H1 (cell line): ENCODE measurements at regions of chr19 and their contacts with region 1.

Region 1: GRCh38 chr19:17336872-17337722 is at the start of gene GTPBP3:
- DNase-seq: peak; percentile 94 to 96
- H3K4me3 ChIP-seq: peak within 1 kb of the TSS; percentile 74 to 99 (median 96)
- H3K27ac ChIP-seq: peak within 1 kb of the TSS; percentile 83
- H3K4me1 ChIP-seq: peaks cover 0 to 36% (median 28%) of the 10 kb centered on the region in 4 experiments; a peak in 5 of 7 replicates
- H3K27me3 ChIP-seq: no peaks in the 10 kb centered on the region
- CTCF ChIP-seq: no peak
- EP300 ChIP-seq: no peak
- POLR2A ChIP-seq: peak in 1 of 2 experiments; percentile 86; a peak in 2 of 3 replicates
- RAD21 ChIP-seq: no peak
- total RNA-seq, gene GTPBP3: 52.7 and 56.0 TPM in 2 replicates

Region 2: GRCh38 chr19:17226002-17226933 is 110.8 kb before region 1 on chr19 and contains the start of gene OCEL1:
- CTCF ChIA-PET with region 1: no interaction called
- POLR2A ChIA-PET with region 1: interaction called, 14 read pairs
- DNase-seq: peak; percentile 89 to 96
- H3K4me3 ChIP-seq: peak within 1 kb of the TSS; percentile 52 to 80 (median 65)
- H3K27ac ChIP-seq: peak within 1 kb of the TSS; percentile 84; the same call in 1 of the 2 replicates
- H3K4me1 ChIP-seq: peaks cover 0 to 4% (median 3%) of the 10 kb centered on the region in 4 experiments; a peak in 6 of 7 replicates
- H3K27me3 ChIP-seq: no peaks in the 10 kb centered on the region
- CTCF ChIP-seq: no peak
- EP300 ChIP-seq: no peak
- POLR2A ChIP-seq: peak; percentile 50 to 86
- RAD21 ChIP-seq: no peak
- total RNA-seq, gene OCEL1: 32.1 and 32.6 TPM in 2 replicates

Region 3: DNA sequence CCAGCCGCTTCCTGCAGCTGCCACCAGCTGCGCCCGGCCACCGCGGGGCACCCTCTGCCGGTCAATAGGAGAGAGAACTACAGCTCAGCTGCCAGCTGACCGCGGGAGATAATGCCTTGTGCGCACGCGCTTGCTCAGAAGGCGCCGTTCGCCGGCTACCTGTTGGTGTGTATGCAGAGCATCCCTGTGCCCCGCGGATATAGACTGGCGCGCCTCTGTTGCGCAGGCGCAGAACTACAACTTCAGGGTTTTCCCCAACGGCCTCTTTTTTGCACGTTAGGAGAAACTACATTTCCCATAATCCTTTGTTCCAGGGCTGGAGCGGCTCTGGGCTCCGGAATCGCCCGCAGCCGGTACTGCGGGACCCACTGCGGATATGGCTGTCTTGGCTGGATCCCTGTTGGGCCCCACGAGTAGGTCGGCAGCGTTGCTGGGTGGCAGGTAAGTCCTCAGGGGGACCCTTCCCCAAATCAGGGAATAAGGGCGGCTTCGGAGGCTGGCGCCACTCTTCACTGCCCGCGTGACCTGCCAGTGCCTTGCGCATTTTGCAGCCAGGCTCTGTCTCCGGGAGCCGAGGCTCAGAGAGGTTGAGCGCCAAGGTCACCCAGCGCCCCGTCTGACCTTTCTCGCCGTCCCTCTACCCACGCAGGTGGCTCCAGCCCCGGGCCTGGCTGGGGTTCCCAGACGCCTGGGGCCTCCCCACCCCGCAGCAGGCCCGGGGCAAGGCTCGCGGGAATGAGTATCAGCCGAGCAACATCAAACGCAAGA is 31.4 kb before region 1 on chr19 and contains the start of gene MRPL34:
- CTCF ChIA-PET with region 1: interaction called, 9 read pairs
- POLR2A ChIA-PET with region 1: interaction called, 329 read pairs
- DNase-seq: peak; percentile 96 to 100
- H3K4me3 ChIP-seq: peak within 1 kb of the TSS; percentile 75 to 95 (median 80)
- H3K27ac ChIP-seq: peak within 1 kb of the TSS; percentile 81
- H3K4me1 ChIP-seq: peaks cover 14 to 28% (median 19%) of the 10 kb centered on the region in 4 experiments
- H3K27me3 ChIP-seq: no peaks in the 10 kb centered on the region
- CTCF ChIP-seq: peak; percentile 67 to 88 (median 81)
- EP300 ChIP-seq: peak; percentile 23 to 61; a peak in 1 of 3 replicates
- POLR2A ChIP-seq: peak; percentile 19 to 66
- RAD21 ChIP-seq: peak; percentile 47 to 63
- total RNA-seq, gene MRPL34: 99.6 and 100 TPM in 2 replicates